Naive thymus-derived CD4-positive, alpha-beta T cell (primary cell): ENCODE measurements at regions of chr6 and their contacts with region 1.

Region 1: DNA sequence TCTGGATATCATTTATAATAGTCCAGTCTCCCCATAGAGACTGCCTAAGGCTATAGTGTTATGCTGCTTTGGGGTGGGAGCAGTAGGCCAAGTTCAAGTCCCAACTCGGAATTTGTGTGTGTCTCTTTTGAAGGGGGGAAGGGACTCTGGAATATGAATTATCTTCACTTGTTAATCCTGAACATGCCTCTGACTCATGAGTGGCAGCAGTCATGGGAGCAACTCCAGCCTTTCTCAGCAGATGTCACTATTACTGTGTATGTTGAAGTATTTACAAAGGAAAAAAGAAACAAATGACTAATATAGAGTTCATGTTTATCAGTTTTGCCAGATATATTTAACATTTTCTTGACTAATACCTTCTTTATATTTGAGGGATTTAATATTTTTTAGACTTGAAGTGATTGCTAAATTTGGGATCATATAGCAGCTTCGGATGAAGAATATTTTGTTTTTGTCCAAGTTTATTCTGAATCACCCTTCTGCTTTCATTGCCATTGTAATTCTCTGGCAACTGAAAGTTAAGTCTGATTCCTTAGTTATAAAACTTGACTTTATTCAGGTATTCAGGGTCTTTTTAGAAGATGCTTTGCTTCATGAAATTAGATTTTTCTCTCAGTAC is 23.4 kb downstream of the FAM217A start:
- DNase-seq: no peak
- ATAC-seq: peak; percentile 25
- H3K4me3 ChIP-seq: no peak overlapping the region
- H3K4me3 Mint-ChIP-seq: no peak overlapping the region
- H3K27ac ChIP-seq: no peak overlapping the region
- H3K27ac Mint-ChIP-seq: peak overlapping the region in 3 of 9 donors; percentile 63 to 82 (median 64)
- H3K4me1 ChIP-seq: peaks cover 0 to 9% of the 10 kb centered on the region in 2 donors
- H3K4me1 Mint-ChIP-seq: peaks cover 9 to 36% (median 17%) of the 10 kb centered on the region in 7 donors
- H3K27me3 ChIP-seq: no peaks in the 10 kb centered on the region
- H3K27me3 Mint-ChIP-seq: no peaks in the 10 kb centered on the region

Region 2: GRCh38 chr6:3031857-3032640 is 1023.5 kb before region 1 on chr6:
- CTCF ChIA-PET with region 1: no interaction called
- POLR2A ChIA-PET with region 1: no interaction called
- intact Hi-C with region 1: no loop called
- DNase-seq: peak in 4 of 9 donors; percentile 18 to 43 (median 36)
- ATAC-seq: peak; percentile 61
- H3K4me3 ChIP-seq: no peak overlapping the region
- H3K4me3 Mint-ChIP-seq: no peak overlapping the region
- H3K27ac ChIP-seq: no peak overlapping the region
- H3K27ac Mint-ChIP-seq: no peak overlapping the region
- H3K4me1 ChIP-seq: peaks cover 5% of the 10 kb centered on the region in 2 donors
- H3K4me1 Mint-ChIP-seq: peaks cover 3 to 25% (median 14%) of the 10 kb centered on the region in 7 donors
- H3K27me3 ChIP-seq: no peaks in the 10 kb centered on the region
- H3K27me3 Mint-ChIP-seq: peaks cover 0 to 47% (median 0%) of the 10 kb centered on the region in 5 donors

Region 3: DNA sequence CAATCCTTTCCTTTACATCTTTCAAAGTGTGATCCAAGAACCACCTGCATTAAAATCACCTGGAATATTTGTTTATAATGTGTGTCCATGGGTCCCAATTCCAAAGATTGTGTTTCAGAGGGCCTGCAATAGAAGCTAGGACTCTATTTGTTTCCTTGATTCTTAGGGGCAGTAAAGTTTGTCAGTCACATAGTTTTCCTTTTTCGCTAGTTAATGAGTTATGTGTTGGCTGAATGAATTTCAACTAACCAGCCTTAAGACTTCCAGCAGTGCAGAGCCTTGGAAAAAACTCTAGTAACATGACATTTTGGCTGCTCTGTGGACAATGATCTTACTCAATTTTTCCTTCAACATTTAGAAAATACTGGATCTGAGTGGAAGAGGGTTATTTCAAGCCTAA is 12.1 kb after region 1 on chr6:
- CTCF ChIA-PET with region 1: interaction called, 4 read pairs
- POLR2A ChIA-PET with region 1: interaction called, 6 read pairs
- intact Hi-C with region 1: loop called in 1 of 2 experiments (anchors 1 kb)
- DNase-seq: no peak
- ATAC-seq: no peak
- H3K4me3 ChIP-seq: no peak overlapping the region
- H3K4me3 Mint-ChIP-seq: no peak overlapping the region
- H3K27ac ChIP-seq: no peak overlapping the region
- H3K27ac Mint-ChIP-seq: peak overlapping the region in 4 of 9 donors; percentile 9 to 45 (median 24)
- H3K4me1 ChIP-seq: no peaks in the 10 kb centered on the region
- H3K4me1 Mint-ChIP-seq: no peaks in the 10 kb centered on the region
- H3K27me3 ChIP-seq: no peaks in the 10 kb centered on the region
- H3K27me3 Mint-ChIP-seq: no peaks in the 10 kb centered on the region

Region 4: GRCh38 chr6:4210629-4211423 is 155.3 kb after region 1 on chr6:
- CTCF ChIA-PET with region 1: interaction called, 3 read pairs
- POLR2A ChIA-PET with region 1: no interaction called
- intact Hi-C with region 1: loop called (anchors 1 to 2 kb)
- DNase-seq: peak; percentile 17 to 56 (median 45)
- ATAC-seq: peak; percentile 86
- H3K4me3 ChIP-seq: no peak overlapping the region
- H3K4me3 Mint-ChIP-seq: peak overlapping the region in 5 of 10 donors; percentile 1 to 59 (median 25)
- H3K27ac ChIP-seq: no peak overlapping the region
- H3K27ac Mint-ChIP-seq: peak overlapping the region in 6 of 9 donors; percentile 14 to 70 (median 52)
- H3K4me1 ChIP-seq: peaks cover 0 to 16% of the 10 kb centered on the region in 2 donors
- H3K4me1 Mint-ChIP-seq: peaks cover 12 to 36% (median 23%) of the 10 kb centered on the region in 7 donors
- H3K27me3 ChIP-seq: no peaks in the 10 kb centered on the region
- H3K27me3 Mint-ChIP-seq: peaks cover 0 to 7% (median under 1%) of the 10 kb centered on the region in 5 donors